Naive thymus-derived CD8-positive, alpha-beta T cell (primary cell): ENCODE measurements at regions of chr19 and their contacts with region 1.

Region 1: GRCh38 chr19:40425450-40426287 is at the start of gene SERTAD1:
- DNase-seq: peak; percentile 98 to 100 (median 100)
- ATAC-seq: peak; percentile 87 to 92
- H3K4me3 Mint-ChIP-seq: peak within 1 kb of the TSS; percentile 86 to 98 (median 94)
- H3K27ac Mint-ChIP-seq: peak within 1 kb of the TSS; percentile 91 to 100 (median 98)
- H3K4me1 Mint-ChIP-seq: peaks cover 8 to 33% (median 22%) of the 10 kb centered on the region in 4 donors
- H3K27me3 Mint-ChIP-seq: peaks cover 0 to 2% (median 0%) of the 10 kb centered on the region in 5 donors
- polyA plus RNA-seq, gene SERTAD1: 2.6 to 10.4 (median 3.5) TPM

Region 2: GRCh38 chr19:40305403-40305802 is 120.3 kb before region 1 on chr19:
- POLR2A ChIA-PET with region 1: interaction called, 11 read pairs
- DNase-seq: peak; percentile 51 to 87 (median 67)
- ATAC-seq: peak; percentile 71 to 75
- H3K4me3 Mint-ChIP-seq: no peak overlapping the region
- H3K27ac Mint-ChIP-seq: no peak overlapping the region
- H3K4me1 Mint-ChIP-seq: peaks cover 2 to 5% (median 3%) of the 10 kb centered on the region in 4 donors
- H3K27me3 Mint-ChIP-seq: no peaks in the 10 kb centered on the region

Region 3: GRCh38 chr19:40381321-40381720 is 44.3 kb before region 1 on chr19:
- POLR2A ChIA-PET with region 1: no interaction called
- DNase-seq: no peak
- ATAC-seq: no peak
- H3K4me3 Mint-ChIP-seq: no peak overlapping the region
- H3K27ac Mint-ChIP-seq: peak overlapping the region in 4 of 10 donors; percentile 26 to 48 (median 34)
- H3K4me1 Mint-ChIP-seq: peaks cover 0 to 3% (median 0%) of the 10 kb centered on the region in 4 donors
- H3K27me3 Mint-ChIP-seq: no peaks in the 10 kb centered on the region

Region 4: GRCh38 chr19:40403262-40403984 is 22.2 kb before region 1 on chr19:
- POLR2A ChIA-PET with region 1: interaction called, 18 read pairs
- DNase-seq: peak; percentile 56 to 83 (median 72)
- ATAC-seq: peak; percentile 57 to 62
- H3K4me3 Mint-ChIP-seq: peak overlapping the region; percentile 88 to 100 (median 98)
- H3K27ac Mint-ChIP-seq: peak overlapping the region; percentile 81 to 98 (median 92)
- H3K4me1 Mint-ChIP-seq: peaks cover 21 to 44% (median 34%) of the 10 kb centered on the region in 4 donors
- H3K27me3 Mint-ChIP-seq: no peaks in the 10 kb centered on the region

Region 5: GRCh38 chr19:40465557-40466150 is 40.0 kb after region 1 on chr19 and contains the start of gene BLVRB:
- POLR2A ChIA-PET with region 1: interaction called, 21 read pairs
- DNase-seq: peak; percentile 98 to 100 (median 99)
- ATAC-seq: peak; percentile 79 to 85
- H3K4me3 Mint-ChIP-seq: peak within 1 kb of the TSS; percentile 78 to 94 (median 88)
- H3K27ac Mint-ChIP-seq: peak within 1 kb of the TSS; percentile 64 to 96 (median 90)
- H3K4me1 Mint-ChIP-seq: peaks cover 25 to 42% (median 28%) of the 10 kb centered on the region in 4 donors
- H3K27me3 Mint-ChIP-seq: peaks cover 5 to 11% (median 8%) of the 10 kb centered on the region in 5 donors
- polyA plus RNA-seq, gene BLVRB: 17.3 to 27.8 (median 22.6) TPM

Region 6: DNA sequence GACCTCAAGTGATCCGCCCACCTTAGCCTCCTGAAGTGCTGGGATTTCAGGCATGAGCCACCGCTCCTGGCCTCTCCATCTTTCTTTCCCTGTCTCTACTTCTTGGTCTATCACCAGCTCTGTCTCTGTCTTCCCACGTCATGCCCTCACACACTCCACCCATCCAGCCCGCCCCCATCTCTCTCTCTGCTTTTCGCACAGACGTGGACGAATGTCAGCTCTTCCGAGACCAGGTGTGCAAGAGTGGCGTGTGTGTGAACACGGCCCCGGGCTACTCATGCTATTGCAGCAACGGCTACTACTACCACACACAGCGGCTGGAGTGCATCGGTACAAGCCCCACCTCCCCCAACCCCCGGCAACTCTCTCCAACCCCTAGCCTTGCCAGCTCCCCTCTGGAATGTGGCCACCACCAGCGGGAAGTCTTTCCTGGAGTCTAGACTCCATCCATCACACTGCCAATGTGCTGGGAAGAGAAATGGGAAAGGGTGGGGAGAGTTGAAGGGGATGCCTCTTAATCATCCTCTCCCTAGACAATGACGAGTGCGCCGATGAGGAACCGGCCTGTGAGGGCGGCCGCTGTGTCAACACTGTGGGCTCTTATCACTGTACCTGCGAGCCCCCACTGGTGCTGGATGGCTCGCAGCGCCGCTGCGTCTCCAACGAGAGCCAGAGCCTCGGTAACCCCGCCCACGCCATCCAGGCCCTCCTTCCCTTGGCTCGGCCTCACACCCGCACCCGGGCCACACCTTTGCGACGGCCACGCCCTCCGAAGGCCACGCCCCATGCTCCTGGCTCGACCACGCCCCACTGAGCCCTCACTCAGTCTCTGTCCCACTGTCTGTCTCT is 198.0 kb after region 1 on chr19:
- POLR2A ChIA-PET with region 1: no interaction called
- DNase-seq: peak in 1 of 10 donors; percentile 62
- ATAC-seq: no peak
- H3K4me3 Mint-ChIP-seq: no peak overlapping the region
- H3K27ac Mint-ChIP-seq: no peak overlapping the region
- H3K4me1 Mint-ChIP-seq: peaks cover 0 to 16% (median 2%) of the 10 kb centered on the region in 4 donors
- H3K27me3 Mint-ChIP-seq: no peaks in the 10 kb centered on the region